CD4-positive, alpha-beta T cell (primary cell): ENCODE measurements at regions of chr7 and their contacts with region 1.

Region 1: DNA sequence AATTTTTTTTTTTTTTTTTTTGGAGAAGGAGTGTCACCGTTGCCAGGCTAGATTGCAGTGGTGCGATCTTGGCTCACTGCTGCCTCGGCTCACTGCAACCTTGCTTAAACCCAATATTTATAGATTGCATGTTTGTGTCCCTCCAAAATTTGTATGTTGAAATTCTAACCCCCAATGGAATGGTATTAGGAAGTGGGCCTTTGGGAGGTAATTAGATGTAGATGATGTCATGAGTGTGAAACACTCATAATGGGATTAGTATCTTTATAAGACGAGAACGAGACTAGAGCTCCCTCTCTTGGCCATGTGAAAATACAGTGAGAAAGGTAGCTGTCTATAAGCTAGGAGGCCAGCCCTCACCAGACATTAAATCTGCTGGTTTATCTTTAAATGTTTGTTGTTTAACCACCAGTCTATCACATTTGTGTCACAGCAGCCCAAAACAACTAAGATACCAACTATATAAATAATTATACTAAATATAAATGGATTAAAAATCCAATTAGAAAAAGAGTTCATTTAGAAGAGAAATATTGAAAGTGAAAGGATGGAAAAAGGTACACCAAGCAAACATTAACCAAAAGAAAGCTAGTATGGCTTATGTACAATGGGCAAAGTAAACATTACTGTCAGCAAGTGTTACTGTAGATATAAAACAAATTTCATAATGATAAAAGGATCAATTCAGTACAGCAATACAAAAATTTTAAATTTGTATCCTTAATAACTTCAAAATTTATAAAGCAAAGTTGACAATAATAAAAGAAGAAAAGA is 9.3 kb downstream of the TCAF1 start:
- DNase-seq: peak in 3 of 14 experiments; percentile 53 to 64 (median 54)
- ATAC-seq: peak; percentile 68
- H3K4me3 ChIP-seq: no peak overlapping the region
- H3K4me3 Mint-ChIP-seq: no peak overlapping the region
- H3K27ac ChIP-seq: no peak overlapping the region
- H3K27ac Mint-ChIP-seq: no peak overlapping the region
- H3K4me1 ChIP-seq: no peaks in the 10 kb centered on the region
- H3K4me1 Mint-ChIP-seq: peaks cover 4% of the 10 kb centered on the region
- H3K27me3 ChIP-seq: peaks cover 0 to 1% of the 10 kb centered on the region in 2 experiments
- H3K27me3 Mint-ChIP-seq: peaks cover 23% of the 10 kb centered on the region
- CTCF ChIP-seq: peak; percentile 12

Region 2: DNA sequence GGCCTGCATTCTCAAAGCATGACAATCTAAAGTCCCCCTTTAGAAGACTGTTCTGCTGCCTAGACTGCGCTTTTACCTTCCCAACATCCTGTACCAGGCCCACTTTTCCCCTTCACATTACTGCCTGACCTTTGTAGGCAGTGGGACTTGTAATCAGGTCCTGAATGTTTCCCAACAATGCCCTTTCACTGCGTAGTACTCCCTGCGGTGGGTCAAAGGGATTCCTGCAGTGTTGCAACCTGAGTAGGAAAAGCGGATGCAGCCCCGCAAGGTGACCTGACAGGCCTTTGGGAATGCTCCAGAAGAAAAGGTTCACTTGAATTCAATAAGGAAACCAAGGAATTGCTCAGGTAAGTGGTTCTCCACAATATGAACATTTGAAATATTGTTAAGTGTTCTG is 14.2 kb after region 1 on chr7:
- CTCF ChIA-PET with region 1: interaction called, 12 read pairs
- POLR2A ChIA-PET with region 1: interaction called, 11 read pairs
- intact Hi-C with region 1: loop called in 1 of 2 experiments (anchors 2 kb)
- DNase-seq: no peak
- ATAC-seq: no peak
- H3K4me3 ChIP-seq: no peak overlapping the region
- H3K4me3 Mint-ChIP-seq: no peak overlapping the region
- H3K27ac ChIP-seq: no peak overlapping the region
- H3K27ac Mint-ChIP-seq: no peak overlapping the region
- H3K4me1 ChIP-seq: no peaks in the 10 kb centered on the region
- H3K4me1 Mint-ChIP-seq: peaks cover 5% of the 10 kb centered on the region
- H3K27me3 ChIP-seq: peaks cover 0 to 3% of the 10 kb centered on the region in 2 experiments
- H3K27me3 Mint-ChIP-seq: peaks cover 13% of the 10 kb centered on the region
- CTCF ChIP-seq: no peak

Region 3: DNA sequence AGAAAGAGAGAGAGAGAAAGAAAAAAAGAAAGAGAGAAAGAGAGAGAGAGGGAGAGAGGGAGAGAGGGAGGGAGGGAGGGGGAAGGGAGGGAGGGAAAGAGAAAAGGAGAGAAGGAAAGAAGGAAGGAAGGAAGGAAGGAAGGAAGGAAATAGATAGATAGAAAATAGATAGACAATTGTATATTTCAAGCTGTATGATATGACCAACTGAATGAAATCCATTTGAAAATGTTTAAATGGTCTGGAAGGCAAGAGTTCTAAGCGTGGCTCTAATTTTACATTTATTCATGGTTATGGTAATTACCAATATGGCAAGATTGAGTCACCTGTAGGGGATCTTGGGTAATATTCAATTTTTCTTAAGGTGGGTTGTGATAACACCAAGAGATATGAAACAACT is 266.1 kb after region 1 on chr7:
- CTCF ChIA-PET with region 1: no interaction called
- POLR2A ChIA-PET with region 1: no interaction called
- intact Hi-C with region 1: no loop called
- DNase-seq: no peak
- ATAC-seq: no peak
- H3K4me3 ChIP-seq: no peak overlapping the region
- H3K4me3 Mint-ChIP-seq: no peak overlapping the region
- H3K27ac ChIP-seq: no peak overlapping the region
- H3K27ac Mint-ChIP-seq: no peak overlapping the region
- H3K4me1 ChIP-seq: no peaks in the 10 kb centered on the region
- H3K4me1 Mint-ChIP-seq: no peaks in the 10 kb centered on the region
- H3K27me3 ChIP-seq: no peaks in the 10 kb centered on the region
- H3K27me3 Mint-ChIP-seq: peaks cover 27% of the 10 kb centered on the region
- CTCF ChIP-seq: no peak